Activated T-helper 1 cell treated with anti-CD3 and anti-CD28 coated beads, Interleukin-12 subunit alpha, Interleukin-12 subunit beta, Interleukin-2, Interleukin-4 antibody, amounts not matched to agents 30 ng/mL and 10 ng/mL and 1 ng/mL, durations not matched to agents 14 hours and 24 hours and 36 hours (primary cell): ENCODE measurements at regions of chr4 and their contacts with region 1.

Region 1: DNA sequence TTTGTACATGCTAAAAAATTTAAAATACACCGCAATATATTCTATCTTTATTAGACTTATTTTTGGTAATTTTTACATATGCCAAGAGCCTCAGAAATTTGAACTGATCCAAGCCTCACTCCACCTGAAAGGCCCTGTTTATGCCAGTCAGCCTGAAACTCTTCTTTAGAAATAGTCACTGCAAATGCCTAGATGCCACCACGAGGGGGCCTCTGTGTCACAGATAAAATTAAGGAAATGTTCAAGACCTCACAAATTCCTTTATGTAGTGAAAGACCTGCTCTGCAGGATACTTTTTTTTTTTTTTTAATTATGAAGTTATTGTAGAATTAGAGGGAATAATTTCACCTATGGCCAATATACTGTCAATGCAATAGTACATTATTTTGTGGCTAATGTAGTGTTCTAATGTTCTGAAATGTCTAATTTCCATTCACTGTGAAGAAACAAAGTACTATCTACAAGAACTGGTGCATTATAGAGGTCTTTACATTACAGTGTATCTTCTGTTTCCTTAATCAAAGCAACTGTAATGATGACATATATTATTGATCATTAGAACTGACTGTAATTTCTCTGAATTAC is 69.8 kb downstream of the DTHD1 start:
- DNase-seq: peak; percentile 60
- H3K4me3 Mint-ChIP-seq: no peak overlapping the region
- H3K27ac Mint-ChIP-seq: no peak overlapping the region
- H3K4me1 Mint-ChIP-seq: peaks cover 40% of the 10 kb centered on the region
- H3K27me3 Mint-ChIP-seq: peaks cover 2% of the 10 kb centered on the region

Region 2: GRCh38 chr4:36187723-36188333 is 163.3 kb before region 1 on chr4:
- intact Hi-C with region 1: loop called (anchors 1 kb)
- DNase-seq: no peak
- H3K4me3 Mint-ChIP-seq: no peak overlapping the region
- H3K27ac Mint-ChIP-seq: no peak overlapping the region
- H3K4me1 Mint-ChIP-seq: peaks cover 39% of the 10 kb centered on the region
- H3K27me3 Mint-ChIP-seq: no peaks in the 10 kb centered on the region

Region 3: DNA sequence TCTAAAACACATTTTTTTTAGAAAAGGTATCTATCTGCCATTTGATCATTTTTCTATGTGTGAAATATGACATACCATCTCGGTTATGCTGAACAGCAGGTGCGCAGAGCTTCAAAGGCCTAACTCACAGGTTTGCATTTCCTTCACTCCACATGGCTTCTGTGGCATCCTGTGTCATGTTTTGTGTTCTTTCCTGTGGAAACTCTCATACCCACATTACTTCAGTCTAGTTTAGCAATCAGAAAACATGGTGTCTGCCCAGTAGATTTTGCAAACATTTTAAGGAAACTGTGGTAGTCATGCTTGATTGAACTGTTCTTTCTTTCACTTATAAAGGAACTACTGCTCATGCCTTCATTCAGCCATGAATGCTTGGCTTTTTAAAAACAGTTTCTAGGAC is 95.6 kb before region 1 on chr4:
- intact Hi-C with region 1: loop called (anchors 1 kb)
- DNase-seq: peak; percentile 72
- H3K4me3 Mint-ChIP-seq: peak overlapping the region; percentile 81
- H3K27ac Mint-ChIP-seq: peak overlapping the region; percentile 97
- H3K4me1 Mint-ChIP-seq: peaks cover 47% of the 10 kb centered on the region
- H3K27me3 Mint-ChIP-seq: no peaks in the 10 kb centered on the region

Region 4: GRCh38 chr4:36325499-36325898 is 25.7 kb before region 1 on chr4:
- intact Hi-C with region 1: loop called (anchors 1 kb)
- DNase-seq: no peak
- H3K4me3 Mint-ChIP-seq: peak overlapping the region; percentile 23
- H3K27ac Mint-ChIP-seq: peak overlapping the region; percentile 73
- H3K4me1 Mint-ChIP-seq: peaks cover 71% of the 10 kb centered on the region
- H3K27me3 Mint-ChIP-seq: no peaks in the 10 kb centered on the region

Region 5: GRCh38 chr4:36399762-36400353 is 48.7 kb after region 1 on chr4:
- intact Hi-C with region 1: loop called (anchors 1 kb)
- DNase-seq: peak; percentile 15
- H3K4me3 Mint-ChIP-seq: no peak overlapping the region
- H3K27ac Mint-ChIP-seq: no peak overlapping the region
- H3K4me1 Mint-ChIP-seq: peaks cover 23% of the 10 kb centered on the region
- H3K27me3 Mint-ChIP-seq: peaks cover 9% of the 10 kb centered on the region

Region 6: DNA sequence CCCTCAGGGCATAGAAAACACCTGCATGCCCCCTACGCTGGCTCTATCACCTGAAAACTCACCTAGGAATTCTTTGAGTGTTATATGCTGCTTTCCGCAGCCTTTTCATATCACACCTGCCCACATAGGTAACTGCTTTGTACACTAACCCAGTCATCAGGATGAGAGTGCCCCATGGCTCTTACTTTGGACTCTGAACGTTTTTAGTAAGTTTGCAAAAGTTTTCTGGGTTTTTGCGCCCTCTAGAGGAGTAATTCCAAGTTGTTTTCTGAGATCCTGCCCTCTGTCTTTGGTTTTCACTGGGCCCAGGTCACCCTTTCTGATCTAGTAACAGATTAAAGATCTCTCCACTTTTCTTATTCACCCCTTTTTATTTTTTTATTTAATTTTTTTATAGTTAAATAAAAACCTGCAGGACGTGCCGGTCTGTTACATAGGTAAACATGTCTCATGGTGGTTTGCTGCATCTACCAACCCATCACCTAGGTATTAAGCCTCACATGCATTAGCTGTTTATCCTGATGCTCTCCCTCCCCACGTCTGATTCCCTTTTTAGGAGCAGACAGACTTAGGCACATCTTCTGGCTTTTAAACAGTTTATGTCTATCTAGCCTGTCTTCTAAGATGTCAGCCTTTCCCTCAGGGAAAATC is 1032.5 kb after region 1 on chr4:
- intact Hi-C with region 1: loop called (anchors 2 kb)
- DNase-seq: no peak
- H3K4me3 Mint-ChIP-seq: no peak overlapping the region
- H3K27ac Mint-ChIP-seq: no peak overlapping the region
- H3K4me1 Mint-ChIP-seq: no peaks in the 10 kb centered on the region
- H3K27me3 Mint-ChIP-seq: no peaks in the 10 kb centered on the region